ENCODE measurements at regions of chr20 and their contacts with region 1.

Region 1: GRCh38 chr20:64229507-64230061 is 26.0 kb upstream of the PCMTD2 start:
- DNase-seq: no peak
- ATAC-seq: no peak
- H3K4me3 ChIP-seq: no peak overlapping the region
- H3K27ac ChIP-seq: no peak overlapping the region
- H3K4me1 ChIP-seq: peaks cover 3 to 27% (median 14%) of the 10 kb centered on the region in 9 donors
- H3K27me3 ChIP-seq: no peaks in the 10 kb centered on the region
- CTCF ChIP-seq: no peak

Region 2: GRCh38 chr20:64212755-64213154 is 16.8 kb before region 1 on chr20:
- intact Hi-C with region 1: no loop called
- DNase-seq: peak; percentile 68 to 74
- ATAC-seq: peak; percentile 75 to 93 (median 90)
- H3K4me3 ChIP-seq: no peak overlapping the region
- H3K27ac ChIP-seq: peak overlapping the region in 8 of 10 donors; percentile 46 to 80 (median 73)
- H3K4me1 ChIP-seq: peaks cover 9 to 37% (median 20%) of the 10 kb centered on the region in 9 donors
- H3K27me3 ChIP-seq: no peaks in the 10 kb centered on the region
- CTCF ChIP-seq: peak in 1 of 9 donors; percentile 8

Region 3: GRCh38 chr20:64253443-64253842 is 23.9 kb after region 1 on chr20:
- intact Hi-C with region 1: loop called in 1 of 10 experiments (anchors 2 kb)
- DNase-seq: no peak
- ATAC-seq: no peak
- H3K4me3 ChIP-seq: no peak overlapping the region
- H3K27ac ChIP-seq: no peak overlapping the region
- H3K4me1 ChIP-seq: peaks cover 0 to 30% (median 22%) of the 10 kb centered on the region in 9 donors
- H3K27me3 ChIP-seq: peaks cover 0 to 9% (median 0%) of the 10 kb centered on the region in 7 donors
- CTCF ChIP-seq: no peak